Ascending aorta (tissue), 2 donors: ENCODE measurements at regions of chr7 and their contacts with region 1.

Region 1: DNA sequence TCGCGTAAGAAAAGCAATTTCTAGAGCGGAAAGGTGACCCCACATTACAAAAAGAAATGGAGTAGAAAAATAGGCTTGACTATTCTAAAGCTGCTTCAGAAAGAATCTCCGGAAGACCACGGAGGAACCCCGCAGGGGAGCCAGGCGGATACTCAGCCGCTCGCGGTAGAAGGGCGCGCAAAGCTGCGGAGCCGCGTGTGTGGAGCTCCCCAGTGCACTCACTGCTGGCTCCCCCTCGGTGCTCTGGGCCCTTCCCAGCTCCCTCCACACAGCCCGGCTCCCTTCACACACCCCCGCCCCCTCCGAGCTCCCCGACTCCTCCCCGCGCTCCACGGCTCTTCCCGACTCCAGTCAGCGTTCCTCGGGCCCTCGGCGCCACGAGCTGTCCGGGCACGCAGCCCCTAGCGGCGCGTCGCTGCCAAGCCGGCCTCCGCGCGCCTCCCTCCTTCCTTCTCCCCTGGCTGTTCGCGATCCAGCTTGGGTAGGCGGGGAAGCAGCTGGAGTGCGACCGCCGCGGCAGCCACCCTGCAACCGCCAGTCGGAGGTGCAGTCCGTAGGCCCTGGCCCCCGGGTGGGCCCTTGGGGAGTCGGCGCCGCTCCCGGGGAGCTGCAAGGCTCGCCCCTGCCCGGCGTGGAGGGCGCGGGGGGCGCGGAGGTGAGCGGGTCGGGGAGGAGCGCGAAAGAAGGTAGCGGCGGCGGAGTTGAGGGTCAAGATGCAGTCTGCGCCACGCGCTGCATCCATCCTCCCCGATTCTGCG is at the start of gene STEAP2:
- DNase-seq: peak; percentile 18 to 94
- H3K4me3 ChIP-seq: peak within 1 kb of the TSS; percentile 75 to 89
- H3K27ac ChIP-seq: peak within 1 kb of the TSS; percentile 81 to 84
- H3K4me1 ChIP-seq: no peaks in the 10 kb centered on the region
- H3K27me3 ChIP-seq: no peaks in the 10 kb centered on the region
- CTCF ChIP-seq: peak; percentile 36 to 75 (median 59)
- total RNA-seq, gene STEAP2: 18.7 TPM

Region 2: DNA sequence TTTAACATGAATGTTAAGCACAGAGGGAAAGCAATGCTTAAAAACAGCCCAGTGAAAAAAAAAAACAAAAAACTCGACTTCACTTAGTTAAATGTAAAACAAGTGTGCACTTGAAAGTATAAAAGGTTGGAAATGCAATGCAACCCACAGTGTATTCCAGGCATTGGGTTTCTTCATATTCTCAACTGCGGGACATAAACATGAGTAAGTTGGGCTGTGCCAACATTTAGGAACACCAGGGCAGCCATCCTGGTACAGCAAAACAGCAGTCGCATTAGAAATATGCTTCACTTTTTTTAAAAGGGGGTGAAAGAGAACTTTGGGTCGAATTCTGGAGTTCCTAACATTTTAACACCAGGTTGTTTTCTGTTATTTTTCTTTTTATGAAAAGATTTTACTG is 56.4 kb before region 1 on chr7:
- intact Hi-C with region 1: loop called (anchors 1 kb)
- DNase-seq: no peak
- H3K4me3 ChIP-seq: no peak overlapping the region
- H3K27ac ChIP-seq: no peak overlapping the region
- H3K4me1 ChIP-seq: no peaks in the 10 kb centered on the region
- H3K27me3 ChIP-seq: no peaks in the 10 kb centered on the region
- CTCF ChIP-seq: no peak

Region 3: DNA sequence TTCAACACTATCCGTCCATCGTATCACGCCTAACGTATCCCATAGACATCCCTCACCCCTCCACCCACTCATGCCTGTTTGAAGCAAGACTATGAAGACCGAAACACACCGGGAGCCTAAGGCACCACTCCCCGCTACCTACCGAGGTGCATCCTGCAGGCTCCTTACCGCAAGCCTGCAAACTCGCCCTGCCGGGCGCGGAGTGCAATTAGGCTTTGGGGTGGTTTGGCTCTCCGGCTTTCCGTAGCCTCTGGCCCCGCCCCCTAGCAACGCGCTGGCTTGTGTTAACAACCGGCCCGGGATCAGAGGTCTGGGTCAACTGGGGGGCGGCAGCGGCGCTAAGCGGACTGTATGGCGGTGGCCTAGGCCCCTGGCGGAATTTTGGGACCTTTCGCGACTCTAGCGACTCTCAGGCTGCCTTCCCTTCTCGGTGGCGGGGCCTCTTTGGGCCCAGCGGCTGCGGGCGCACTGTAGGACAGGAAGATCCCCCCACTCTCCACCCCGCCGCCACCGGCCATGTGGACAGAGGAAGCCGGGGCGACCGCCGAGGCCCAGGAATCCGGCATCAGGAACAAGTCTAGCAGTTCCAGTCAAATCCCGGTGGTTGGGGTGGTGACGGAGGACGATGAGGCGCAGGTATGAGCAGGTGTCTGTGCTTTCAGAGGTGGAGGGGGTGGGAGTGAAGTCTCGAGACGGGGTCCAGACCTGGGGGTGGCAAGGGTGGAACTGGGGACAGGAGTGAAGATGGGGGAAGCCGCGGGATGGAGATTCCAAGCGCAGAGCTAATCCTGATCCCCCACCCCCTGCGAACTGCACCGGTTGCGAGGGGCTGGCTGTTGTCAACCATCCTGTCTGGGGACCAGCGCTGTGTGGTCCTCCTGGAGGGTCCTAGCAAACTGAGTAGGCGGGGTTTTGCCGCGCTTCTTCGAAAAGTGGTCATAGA is 33.6 kb after region 1 on chr7 and contains the start of gene CFAP69:
- intact Hi-C with region 1: loop called (anchors 1 kb)
- DNase-seq: peak; percentile 37 to 96
- H3K4me3 ChIP-seq: peak within 1 kb of the TSS; percentile 88 to 90
- H3K27ac ChIP-seq: peak within 1 kb of the TSS in 1 of 2 donors; percentile 48
- H3K4me1 ChIP-seq: peaks cover 3 to 8% of the 10 kb centered on the region in 2 donors
- H3K27me3 ChIP-seq: no peaks in the 10 kb centered on the region
- CTCF ChIP-seq: peak in 2 of 3 experiments; percentile 20 to 28
- total RNA-seq, gene CFAP69: 0.85 TPM

Region 4: GRCh38 chr7:90262438-90262837 is 50.9 kb after region 1 on chr7:
- intact Hi-C with region 1: loop called (anchors 2 kb)
- DNase-seq: no peak
- H3K4me3 ChIP-seq: no peak overlapping the region
- H3K27ac ChIP-seq: no peak overlapping the region
- H3K4me1 ChIP-seq: peaks cover 0 to 3% of the 10 kb centered on the region in 2 donors
- H3K27me3 ChIP-seq: no peaks in the 10 kb centered on the region
- CTCF ChIP-seq: peak; percentile 31 to 53 (median 52)

Region 5: DNA sequence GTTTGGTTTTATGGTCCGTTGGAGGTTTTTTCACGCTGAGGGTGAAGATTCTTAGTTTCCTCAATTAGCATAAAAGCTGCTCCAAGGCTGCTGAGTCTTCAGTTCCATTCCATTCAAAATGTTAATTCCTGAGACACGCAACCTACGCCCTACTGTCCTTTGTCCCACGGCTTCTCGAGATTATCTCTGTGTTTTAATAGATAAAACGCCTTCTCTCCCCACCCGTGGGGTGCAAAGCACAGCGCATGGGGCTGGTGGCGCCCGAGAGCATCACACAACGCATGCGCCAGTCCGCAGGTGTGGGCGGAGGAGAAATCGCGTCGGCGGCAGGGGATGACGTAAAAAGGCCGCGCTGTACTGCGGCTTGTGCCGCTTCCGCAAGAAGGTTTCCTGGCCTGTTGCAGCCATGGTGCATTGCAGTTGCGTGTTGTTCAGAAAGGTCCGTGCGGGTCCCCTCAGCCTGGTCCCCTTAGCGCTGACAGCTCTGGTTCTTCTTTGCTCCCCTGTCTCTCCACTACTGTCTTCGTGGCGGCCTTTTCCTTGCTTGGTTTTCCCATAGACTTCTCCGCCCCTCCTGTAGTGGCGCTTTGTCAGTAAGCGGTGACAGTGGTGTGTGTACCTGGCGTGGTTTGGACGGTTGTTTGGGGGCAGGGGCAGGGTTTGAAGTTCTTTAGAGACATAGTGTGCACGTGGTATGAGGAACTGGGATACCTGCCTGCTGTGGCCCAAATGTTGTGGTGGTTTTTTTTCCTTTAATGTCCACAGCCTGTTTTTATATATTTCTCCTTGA is 135.0 kb after region 1 on chr7 and contains the start of gene GTPBP10:
- intact Hi-C with region 1: loop called (anchors 5 kb)
- DNase-seq: peak; percentile 60 to 95
- H3K4me3 ChIP-seq: peak within 1 kb of the TSS; percentile 69 to 74
- H3K27ac ChIP-seq: peak within 1 kb of the TSS; percentile 70 to 86
- H3K4me1 ChIP-seq: peaks cover 3 to 8% of the 10 kb centered on the region in 2 donors
- H3K27me3 ChIP-seq: no peaks in the 10 kb centered on the region
- CTCF ChIP-seq: peak; percentile 58 to 84 (median 80)
- total RNA-seq, gene GTPBP10: 4.5 TPM

Region 6: DNA sequence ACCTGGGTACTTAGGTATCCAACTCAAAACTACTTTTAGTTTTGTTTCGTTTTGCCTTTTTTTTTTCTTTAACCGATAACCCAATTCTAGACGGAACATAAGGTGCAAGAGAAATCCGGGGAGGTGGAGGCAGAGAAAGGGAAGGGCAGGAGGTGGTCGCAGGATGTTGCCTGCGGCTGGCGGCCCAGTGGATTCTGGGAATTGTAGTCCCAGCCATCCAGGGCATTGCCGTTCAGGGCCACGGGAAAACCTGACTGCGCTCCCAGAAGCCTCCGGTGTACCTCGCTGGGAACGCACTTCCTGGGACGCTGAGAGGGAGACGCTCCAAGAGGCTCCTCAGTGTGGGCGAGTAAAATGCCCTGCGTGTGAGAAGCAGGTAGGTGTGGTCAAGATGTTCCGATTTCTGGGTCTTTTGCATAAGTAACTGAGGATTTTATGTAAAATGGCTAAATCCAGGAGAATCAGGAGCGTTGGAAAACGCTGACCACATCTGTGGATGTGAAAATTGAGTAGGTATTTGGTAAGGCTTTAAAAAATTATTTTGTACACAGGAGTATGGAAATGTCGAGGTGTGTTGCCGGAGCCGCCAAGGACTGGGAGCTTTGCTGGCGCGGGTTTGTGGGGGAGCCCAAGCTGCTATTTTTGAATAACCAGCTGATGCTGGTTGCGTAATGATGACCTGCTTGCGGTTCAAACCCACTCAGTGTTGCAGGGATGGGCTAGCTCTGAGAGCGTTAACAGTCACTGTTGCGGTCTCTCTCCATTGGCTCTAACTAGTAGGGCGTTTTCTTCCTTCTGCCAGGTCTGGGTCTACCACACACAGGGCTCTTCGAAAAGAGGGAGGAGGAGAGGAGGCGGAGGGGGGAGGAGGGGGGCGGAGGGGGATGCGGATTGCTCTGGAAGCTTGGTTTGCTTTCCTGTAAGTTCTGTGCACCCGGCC is 191.9 kb after region 1 on chr7 and contains the start of gene CLDN12:
- intact Hi-C with region 1: loop called (anchors 2 kb)
- DNase-seq: peak; percentile 61 to 91
- H3K4me3 ChIP-seq: peak within 1 kb of the TSS; percentile 63 to 69
- H3K27ac ChIP-seq: peak within 1 kb of the TSS; percentile 84 to 88
- H3K4me1 ChIP-seq: no peaks in the 10 kb centered on the region
- H3K27me3 ChIP-seq: no peaks in the 10 kb centered on the region
- CTCF ChIP-seq: no peak
- total RNA-seq, gene CLDN12: 55.3 TPM